Prostate gland (tissue), 2 donors: ENCODE measurements at regions of chr1 and their contacts with region 1.

Region 1: DNA sequence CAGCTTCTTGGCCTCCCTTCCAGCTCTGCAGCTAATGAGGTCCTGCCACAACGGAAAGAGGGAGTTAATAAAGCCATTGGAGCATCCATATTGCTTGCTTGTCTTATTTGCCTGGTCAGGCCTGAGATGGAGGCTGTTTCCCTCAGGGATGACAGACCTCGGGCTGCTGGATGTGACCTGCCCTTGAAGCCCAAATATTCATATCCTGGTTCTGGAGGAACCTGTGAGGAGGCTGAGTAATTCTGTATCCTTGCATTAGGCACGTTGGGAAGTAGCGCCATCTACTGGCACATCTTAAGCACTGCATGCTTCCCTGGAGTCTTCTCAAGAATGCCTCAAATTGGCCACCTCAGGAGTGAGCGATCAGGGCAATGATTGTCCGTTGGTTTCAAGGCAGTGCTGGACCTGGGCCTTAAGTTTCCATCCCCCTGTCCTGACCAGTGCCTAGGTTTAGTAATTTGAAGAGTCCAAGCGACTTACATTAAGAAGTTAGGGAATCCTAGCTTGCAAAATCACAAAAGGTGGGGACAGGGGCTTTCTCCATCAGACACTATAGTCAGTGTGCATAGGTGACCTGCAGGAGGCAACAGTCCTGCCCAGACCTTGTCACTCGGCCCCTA is 13.8 kb upstream of the NASP start:
- DNase-seq: peak; percentile 67
- H3K4me3 ChIP-seq: no peak overlapping the region
- H3K27ac ChIP-seq: peak overlapping the region in 1 of 2 donors; percentile 42
- H3K4me1 ChIP-seq: peaks cover 9% of the 10 kb centered on the region
- H3K27me3 ChIP-seq: no peaks in the 10 kb centered on the region
- CTCF ChIP-seq: peak; percentile 87 to 97 (median 96)
- POLR2A ChIP-seq: no peak

Region 2: GRCh38 chr1:45359882-45360513 is 210.1 kb before region 1 on chr1:
- intact Hi-C with region 1: loop called (anchors 5 kb)
- DNase-seq: peak; percentile 75
- H3K4me3 ChIP-seq: no peak overlapping the region
- H3K27ac ChIP-seq: peak overlapping the region; percentile 80 to 81
- H3K4me1 ChIP-seq: peaks cover 8% of the 10 kb centered on the region
- H3K27me3 ChIP-seq: no peaks in the 10 kb centered on the region
- CTCF ChIP-seq: peak; percentile 58 to 88 (median 78)
- POLR2A ChIP-seq: no peak

Region 3: DNA sequence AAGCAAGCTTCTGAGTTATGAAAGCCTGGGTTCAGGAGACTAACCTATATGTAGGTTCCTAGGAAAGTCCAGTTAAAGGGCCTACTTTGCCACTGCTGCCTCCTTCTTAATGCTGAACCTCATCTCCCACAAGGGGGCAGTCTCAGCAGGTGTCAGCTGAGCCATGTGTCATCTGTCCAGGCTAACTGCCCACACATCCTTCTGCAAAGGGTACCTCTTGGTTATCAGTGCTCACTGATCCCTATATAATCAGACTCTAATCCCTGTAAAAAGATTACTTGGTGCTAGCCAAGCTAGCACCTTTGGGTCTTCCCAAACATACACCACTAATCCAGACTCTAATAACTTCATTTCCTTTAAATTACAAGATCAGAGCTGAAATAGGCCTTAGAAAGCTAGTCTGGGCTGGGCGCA is 57.4 kb before region 1 on chr1:
- intact Hi-C with region 1: loop called (anchors 2 kb)
- DNase-seq: peak; percentile 67
- H3K4me3 ChIP-seq: no peak overlapping the region
- H3K27ac ChIP-seq: no peak overlapping the region
- H3K4me1 ChIP-seq: no peaks in the 10 kb centered on the region
- H3K27me3 ChIP-seq: no peaks in the 10 kb centered on the region
- CTCF ChIP-seq: peak; percentile 24 to 71 (median 67)
- POLR2A ChIP-seq: no peak

Region 4: DNA sequence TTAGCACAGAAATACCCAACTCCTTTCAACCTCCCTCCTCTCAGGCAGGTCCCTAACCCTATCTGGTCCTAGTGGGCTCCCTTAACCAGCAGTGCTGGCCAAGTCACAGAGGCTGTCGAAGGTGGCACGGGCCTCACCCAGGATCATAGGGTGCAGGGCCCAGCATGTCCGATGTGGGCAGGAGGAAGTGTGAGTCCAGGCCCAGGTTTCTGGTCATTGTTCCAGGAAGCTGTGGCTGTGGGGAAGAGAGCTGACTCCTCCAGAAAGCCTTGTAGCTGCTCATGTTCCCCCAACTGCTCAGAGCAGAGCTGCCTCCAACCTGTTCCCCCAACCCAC is 51.4 kb after region 1 on chr1:
- intact Hi-C with region 1: no loop called
- DNase-seq: no peak
- H3K4me3 ChIP-seq: no peak overlapping the region
- H3K27ac ChIP-seq: peak overlapping the region in 1 of 2 donors; percentile 63
- H3K4me1 ChIP-seq: no peaks in the 10 kb centered on the region
- H3K27me3 ChIP-seq: no peaks in the 10 kb centered on the region
- CTCF ChIP-seq: no peak
- POLR2A ChIP-seq: no peak